ENCODE measurements at regions of chr9 and their contacts with region 1.

Region 1: DNA sequence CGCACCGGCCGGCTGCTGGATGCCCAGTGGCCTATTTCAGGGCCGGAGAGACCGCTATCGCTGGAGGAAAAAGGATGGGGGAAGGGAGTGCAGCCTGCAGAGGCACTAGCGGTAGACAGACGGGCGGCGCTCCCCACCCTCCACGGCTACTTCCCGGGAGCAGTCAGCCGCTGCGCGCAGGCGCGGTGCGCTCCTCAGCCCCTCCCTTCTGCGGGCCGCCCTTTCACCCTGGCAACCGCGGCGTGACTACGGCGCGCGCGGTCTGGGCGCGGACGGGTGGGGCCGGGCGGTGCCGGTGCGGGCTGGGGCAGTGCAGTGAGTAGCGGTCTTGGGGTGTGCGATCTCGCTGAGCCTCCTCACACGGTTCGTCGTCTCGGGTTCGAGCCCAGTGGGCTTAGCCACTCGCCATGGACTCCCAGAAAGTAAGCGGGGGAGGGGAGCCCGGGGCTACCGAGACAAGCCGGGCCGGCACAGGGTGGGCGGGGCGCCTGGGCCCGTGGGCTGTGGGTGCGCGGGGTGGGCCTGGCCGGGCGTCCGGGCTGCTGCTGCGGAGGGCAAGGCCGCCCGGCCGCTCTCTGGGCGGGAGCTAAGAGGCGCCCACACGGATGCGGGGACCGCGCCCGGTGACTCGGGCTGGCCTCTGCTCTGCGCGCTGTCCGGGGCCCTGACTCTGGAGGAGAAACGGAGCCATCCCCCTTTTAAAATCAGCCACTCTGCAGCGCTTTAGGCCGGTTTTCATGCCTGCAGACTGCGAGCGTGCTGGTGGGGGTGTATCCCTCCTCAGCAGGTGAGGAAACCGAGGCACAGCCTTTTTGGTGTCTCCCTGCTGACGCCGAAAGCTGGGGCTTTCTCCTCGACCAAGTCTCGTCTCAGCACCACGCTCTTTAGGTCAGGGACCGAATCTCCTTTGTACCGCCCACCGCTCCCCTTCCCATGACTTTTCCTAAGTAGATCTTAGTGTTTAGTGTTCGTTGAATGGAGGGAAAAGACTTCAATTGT is at the start of gene FSD1L:
- DNase-seq: peak; percentile 88 to 94
- ATAC-seq: peak; percentile 57 to 66
- H3K4me3 ChIP-seq: peak within 1 kb of the TSS; percentile 70 to 94 (median 74)
- H3K27ac ChIP-seq: peak within 1 kb of the TSS; percentile 93 to 96 (median 95)
- H3K4me1 ChIP-seq: peaks cover 49 to 60% of the 10 kb centered on the region in 2 donors
- H3K27me3 ChIP-seq: no peaks in the 10 kb centered on the region
- CTCF ChIP-seq: peak in 2 of 5 experiments; percentile 8 to 32
- POLR2A ChIP-seq: peak; percentile 86 to 97
- total RNA-seq, gene FSD1L: 8.5 to 19.6 (median 12.4) TPM

Region 2: GRCh38 chr9:105557771-105558610 is 109.9 kb after region 1 on chr9 and contains the start of gene FKTN:
- in situ Hi-C with region 1: loop called in 1 of 4 experiments (anchors 25 kb)
- intact Hi-C with region 1: loop called (anchors 10 kb)
- DNase-seq: peak; percentile 78 to 86
- ATAC-seq: peak; percentile 99 to 100
- H3K4me3 ChIP-seq: peak within 1 kb of the TSS; percentile 70 to 98 (median 90)
- H3K27ac ChIP-seq: peak within 1 kb of the TSS; percentile 73 to 84 (median 80)
- H3K4me1 ChIP-seq: peaks cover 6 to 19% of the 10 kb centered on the region in 2 donors
- H3K27me3 ChIP-seq: no peaks in the 10 kb centered on the region
- CTCF ChIP-seq: no peak
- POLR2A ChIP-seq: no peak
- total RNA-seq, gene FKTN: 3.2 to 7.7 (median 6.1) TPM

Region 3: DNA sequence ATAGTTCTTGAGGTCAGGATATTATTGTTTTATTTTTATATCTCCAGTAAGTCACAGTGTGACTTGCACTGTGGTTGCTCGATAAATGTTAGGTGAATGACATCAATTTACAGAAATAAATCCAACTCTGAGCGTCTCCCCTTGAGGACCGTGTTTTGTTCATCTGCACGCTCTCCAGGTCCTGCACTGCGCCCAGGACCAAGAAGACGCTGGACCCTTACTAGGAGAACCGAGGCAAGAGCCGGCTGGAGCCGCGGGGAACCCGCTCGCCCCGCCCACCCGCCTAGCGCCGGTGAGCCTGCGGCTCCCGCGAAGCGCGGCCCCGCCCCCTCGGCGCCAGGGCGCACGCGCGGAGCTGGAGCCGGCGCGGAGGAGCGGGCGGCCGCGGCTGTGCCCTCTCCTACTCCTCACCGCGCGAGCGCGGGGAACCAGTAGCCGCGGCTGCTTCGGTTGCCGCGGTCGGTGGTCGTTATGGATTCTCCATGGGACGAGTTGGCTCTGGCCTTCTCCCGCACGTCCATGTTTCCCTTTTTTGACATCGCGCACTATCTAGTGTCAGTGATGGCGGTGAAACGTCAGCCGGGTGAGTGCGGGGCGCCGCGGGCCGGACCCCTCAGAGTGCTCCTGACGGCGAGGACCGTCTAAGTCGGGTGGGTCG is 246.2 kb after region 1 on chr9 and contains the start of gene TMEM38B:
- in situ Hi-C with region 1: loop called in 2 of 4 experiments (anchors 25 kb)
- intact Hi-C with region 1: loop called (anchors 2 kb)
- DNase-seq: peak; percentile 78 to 87
- ATAC-seq: peak; percentile 64 to 65
- H3K4me3 ChIP-seq: peak within 1 kb of the TSS; percentile 73 to 91 (median 82)
- H3K27ac ChIP-seq: peak within 1 kb of the TSS; percentile 93 to 99 (median 96)
- H3K4me1 ChIP-seq: peaks cover 48 to 58% of the 10 kb centered on the region in 2 donors
- H3K27me3 ChIP-seq: no peaks in the 10 kb centered on the region
- CTCF ChIP-seq: no peak
- POLR2A ChIP-seq: peak; percentile 97 to 99
- total RNA-seq, gene TMEM38B: 81.4 to 97.6 (median 89.8) TPM

Region 4: GRCh38 chr9:105708405-105708804 is 260.3 kb after region 1 on chr9:
- in situ Hi-C with region 1: loop called in 1 of 4 experiments (anchors 25 kb)
- intact Hi-C with region 1: no loop called
- DNase-seq: no peak
- ATAC-seq: no peak
- H3K4me3 ChIP-seq: peak overlapping the region in 3 of 4 donors; percentile 10 to 24 (median 23)
- H3K27ac ChIP-seq: peak overlapping the region; percentile 79 to 84 (median 82)
- H3K4me1 ChIP-seq: peaks cover 48 to 59% of the 10 kb centered on the region in 2 donors
- H3K27me3 ChIP-seq: no peaks in the 10 kb centered on the region
- CTCF ChIP-seq: no peak
- POLR2A ChIP-seq: no peak